ENCODE measurements at regions of chr3 and their contacts with region 1.

Region 1: DNA sequence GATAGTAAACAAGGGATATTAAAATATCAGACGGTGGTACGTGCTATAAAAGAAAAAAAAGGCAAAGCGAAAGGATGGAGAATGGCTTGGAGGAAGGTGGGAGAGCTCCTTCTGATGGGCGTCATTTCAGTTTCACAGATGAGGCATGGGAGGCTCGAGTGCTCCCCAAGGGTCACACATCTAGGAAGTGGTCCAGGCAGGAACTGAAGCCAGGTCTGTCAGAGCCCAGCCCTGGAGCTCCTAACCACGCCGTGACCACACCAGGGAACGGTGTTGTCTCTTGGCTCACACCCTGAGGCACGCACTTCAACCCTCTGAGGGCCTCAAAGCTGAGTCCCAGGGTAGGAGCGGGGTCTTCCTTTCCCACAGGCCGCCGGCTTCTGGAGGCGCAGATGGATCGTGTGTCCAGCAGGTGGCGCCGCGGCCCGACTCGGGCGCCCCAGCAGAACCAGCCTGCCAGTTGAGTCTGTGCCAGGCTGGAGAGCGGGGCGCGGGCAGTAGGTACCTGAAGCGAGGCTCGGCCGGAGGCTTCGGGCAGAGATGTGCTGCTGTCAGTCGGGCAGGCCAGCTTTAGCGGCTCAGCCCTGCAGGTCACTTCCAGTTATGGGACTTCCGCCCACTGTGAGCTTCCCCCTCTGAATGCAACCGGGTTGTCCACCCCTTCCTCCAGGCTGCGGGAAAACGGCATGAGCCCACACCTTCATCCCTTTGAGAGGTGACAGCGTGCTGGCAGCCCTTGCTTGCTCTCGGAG is 68.1 kb downstream of the SLC6A1 start:
- DNase-seq: peak; percentile 69
- CTCF ChIP-seq: peak; percentile 55

Region 2: GRCh38 chr3:10791627-10792026 is 269.0 kb before region 1 on chr3:
- CTCF ChIA-PET with region 1: no interaction called
- POLR2A ChIA-PET with region 1: no interaction called
- DNase-seq: no peak
- CTCF ChIP-seq: no peak

Region 3: GRCh38 chr3:10945683-10946287 is 114.9 kb before region 1 on chr3:
- CTCF ChIA-PET with region 1: interaction called, 24 read pairs
- POLR2A ChIA-PET with region 1: no interaction called
- DNase-seq: peak; percentile 79
- CTCF ChIP-seq: peak; percentile 86

Region 4: DNA sequence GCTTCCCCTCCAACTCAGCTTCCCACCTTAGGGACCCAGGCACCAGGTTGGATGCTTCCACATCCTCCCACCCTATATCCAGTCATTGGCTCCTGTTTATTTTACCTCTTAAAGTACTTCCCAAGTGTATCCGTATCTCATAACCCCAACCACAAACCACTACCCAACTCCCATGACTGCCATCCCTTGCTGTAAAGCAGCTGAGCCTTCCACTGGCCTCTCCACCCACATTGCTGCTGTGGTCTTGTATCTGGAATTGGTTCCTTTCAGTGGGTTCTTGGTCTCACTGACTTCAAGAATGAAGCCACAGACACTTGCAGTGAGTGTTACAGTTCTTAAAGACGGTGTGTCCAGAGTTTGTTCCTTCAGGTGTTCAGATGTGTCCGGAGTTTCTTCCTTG is 13.8 kb after region 1 on chr3:
- CTCF ChIA-PET with region 1: interaction called, 10 read pairs
- POLR2A ChIA-PET with region 1: no interaction called
- DNase-seq: no peak
- CTCF ChIP-seq: no peak

Region 5: GRCh38 chr3:11085093-11085840 is 24.6 kb after region 1 on chr3:
- CTCF ChIA-PET with region 1: no interaction called
- POLR2A ChIA-PET with region 1: no interaction called
- DNase-seq: no peak
- CTCF ChIP-seq: no peak

Region 6: DNA sequence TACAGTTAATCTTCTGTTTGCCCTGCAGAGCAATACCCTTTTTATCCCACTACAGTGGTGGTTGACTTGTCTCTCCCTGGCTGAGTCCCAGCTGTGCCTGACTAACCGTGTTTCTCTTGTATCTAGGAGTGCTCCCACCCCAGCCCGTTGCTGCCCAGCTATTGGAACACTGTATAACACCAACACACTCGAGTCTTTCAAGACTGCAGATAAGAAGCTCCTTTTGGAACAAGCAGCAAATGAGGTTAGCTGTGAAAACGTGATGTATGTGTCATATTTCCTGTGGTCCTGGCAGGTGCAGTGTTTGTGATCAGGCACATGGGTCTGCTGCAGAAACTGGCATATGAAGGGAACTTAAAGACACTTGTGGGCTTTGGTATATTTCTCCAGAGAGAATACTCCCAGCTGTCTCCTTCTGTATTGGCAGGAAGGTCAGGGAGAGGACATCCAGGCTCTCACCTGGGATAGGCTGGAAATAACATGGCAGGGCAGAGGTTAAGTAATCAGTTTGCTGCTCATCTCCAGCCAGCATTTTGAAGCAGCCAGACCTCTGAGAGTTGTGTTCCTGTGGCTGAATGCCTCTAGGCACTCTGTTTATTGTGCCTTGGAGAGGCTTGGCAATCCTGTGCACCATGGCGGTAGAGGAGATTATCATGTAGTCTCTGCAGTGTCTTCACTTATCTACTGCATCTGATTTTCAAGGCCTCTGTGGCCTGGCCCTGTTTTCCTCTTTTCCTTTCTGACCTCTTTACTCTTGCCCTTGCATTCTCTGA is 246.3 kb after region 1 on chr3:
- CTCF ChIA-PET with region 1: no interaction called
- POLR2A ChIA-PET with region 1: no interaction called
- DNase-seq: no peak
- CTCF ChIP-seq: no peak

Measured in GM10248 (cell line).